HEK293 (cell line): ENCODE measurements at regions of chr19 and their contacts with region 1.

Region 1: GRCh38 chr19:50258918-50259372 is 55.5 kb downstream of the MYH14 start:
- H3K4me3 ChIP-seq: no peak overlapping the region
- H3K27ac ChIP-seq: no peak overlapping the region
- H3K4me1 ChIP-seq: no peaks in the 10 kb centered on the region
- CTCF ChIP-seq: peak; percentile 25; the same call in 1 of the 2 replicates

Region 2: GRCh38 chr19:50025024-50025789 is 233.7 kb before region 1 on chr19 and contains the start of gene VRK3:
- CTCF ChIA-PET with region 1: no interaction called
- POLR2A ChIA-PET with region 1: interaction called, 12 read pairs
- H3K4me3 ChIP-seq: peak within 1 kb of the TSS; percentile 90
- H3K27ac ChIP-seq: peak within 1 kb of the TSS; percentile 47; the same call in 1 of the 2 replicates
- H3K4me1 ChIP-seq: peaks cover 6% of the 10 kb centered on the region
- CTCF ChIP-seq: peak; percentile 61

Region 3: DNA sequence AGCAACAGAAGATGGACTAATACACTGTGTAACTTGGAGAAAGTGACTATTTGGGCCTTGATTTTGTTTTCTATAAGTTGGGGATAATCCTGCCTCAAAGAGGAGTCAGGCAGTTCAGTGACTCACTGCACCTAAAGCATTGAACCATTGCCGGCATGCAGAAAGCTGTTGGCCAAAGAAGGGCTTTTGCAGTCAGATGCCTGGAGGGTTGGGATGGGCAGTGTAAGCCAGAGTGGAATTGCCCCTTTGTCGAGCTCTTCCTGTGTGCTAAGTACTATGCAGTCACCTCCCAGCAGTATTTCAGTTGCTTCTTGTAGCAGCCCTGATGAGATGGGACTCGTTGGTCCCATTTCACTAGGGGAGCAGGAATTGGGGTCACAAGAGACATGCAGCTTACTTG is 222.0 kb before region 1 on chr19:
- CTCF ChIA-PET with region 1: no interaction called
- POLR2A ChIA-PET with region 1: no interaction called
- H3K4me3 ChIP-seq: no peak overlapping the region
- H3K27ac ChIP-seq: no peak overlapping the region
- H3K4me1 ChIP-seq: no peaks in the 10 kb centered on the region
- CTCF ChIP-seq: no peak